ENCODE measurements at regions of chr4 and their contacts with region 1.

Region 1: DNA sequence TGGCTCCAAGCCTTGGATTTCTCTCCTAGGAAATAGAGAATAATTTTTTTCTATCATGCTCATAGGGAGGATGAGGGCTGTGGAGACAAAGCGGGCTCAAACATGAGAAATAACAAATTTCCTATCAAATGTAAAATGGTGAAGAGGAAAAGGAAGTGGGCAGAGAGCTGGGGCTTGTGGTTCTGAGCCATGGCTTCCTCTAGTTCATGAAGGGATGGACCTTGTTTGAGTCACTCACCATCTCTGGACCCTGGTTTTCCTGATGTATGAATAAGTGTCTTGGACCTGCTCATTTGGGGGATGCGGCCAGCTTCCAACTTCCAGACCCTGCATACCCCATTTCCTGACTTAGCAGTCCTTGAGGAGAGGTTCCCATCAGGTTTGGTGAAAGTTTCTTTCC is 63.0 kb downstream of the MSX1 start:
- DNase-seq: peak; percentile 34 to 72 (median 69)
- H3K4me3 ChIP-seq: peak overlapping the region in 1 of 7 experiments; percentile 16
- H3K27ac ChIP-seq: no peak overlapping the region
- H3K4me1 ChIP-seq: peaks cover 0 to 15% (median 11%) of the 10 kb centered on the region in 4 experiments
- H3K27me3 ChIP-seq: no peaks in the 10 kb centered on the region

Region 2: GRCh38 chr4:4937926-4938325 is 15.5 kb after region 1 on chr4:
- CTCF ChIA-PET with region 1: interaction called, 12 read pairs
- POLR2A ChIA-PET with region 1: no interaction called
- DNase-seq: no peak
- H3K4me3 ChIP-seq: no peak overlapping the region
- H3K27ac ChIP-seq: no peak overlapping the region
- H3K4me1 ChIP-seq: peaks cover 0 to 3% (median 1%) of the 10 kb centered on the region in 4 experiments
- H3K27me3 ChIP-seq: no peaks in the 10 kb centered on the region